ENCODE measurements at regions of chr16 and their contacts with region 1.

Region 1: GRCh38 chr16:86519649-86520316 is 9.5 kb downstream of the FOXF1 start:
- DNase-seq: no peak
- H3K4me3 ChIP-seq: no peak overlapping the region
- H3K27me3 ChIP-seq: peaks cover 3% of the 10 kb centered on the region
- CTCF ChIP-seq: peak; percentile 88

Region 2: GRCh38 chr16:86037999-86038925 is 481.5 kb before region 1 on chr16:
- CTCF ChIA-PET with region 1: interaction called, 14 read pairs
- POLR2A ChIA-PET with region 1: no interaction called
- DNase-seq: no peak
- H3K4me3 ChIP-seq: no peak overlapping the region
- H3K27me3 ChIP-seq: peaks cover 4% of the 10 kb centered on the region
- CTCF ChIP-seq: no peak

Region 3: DNA sequence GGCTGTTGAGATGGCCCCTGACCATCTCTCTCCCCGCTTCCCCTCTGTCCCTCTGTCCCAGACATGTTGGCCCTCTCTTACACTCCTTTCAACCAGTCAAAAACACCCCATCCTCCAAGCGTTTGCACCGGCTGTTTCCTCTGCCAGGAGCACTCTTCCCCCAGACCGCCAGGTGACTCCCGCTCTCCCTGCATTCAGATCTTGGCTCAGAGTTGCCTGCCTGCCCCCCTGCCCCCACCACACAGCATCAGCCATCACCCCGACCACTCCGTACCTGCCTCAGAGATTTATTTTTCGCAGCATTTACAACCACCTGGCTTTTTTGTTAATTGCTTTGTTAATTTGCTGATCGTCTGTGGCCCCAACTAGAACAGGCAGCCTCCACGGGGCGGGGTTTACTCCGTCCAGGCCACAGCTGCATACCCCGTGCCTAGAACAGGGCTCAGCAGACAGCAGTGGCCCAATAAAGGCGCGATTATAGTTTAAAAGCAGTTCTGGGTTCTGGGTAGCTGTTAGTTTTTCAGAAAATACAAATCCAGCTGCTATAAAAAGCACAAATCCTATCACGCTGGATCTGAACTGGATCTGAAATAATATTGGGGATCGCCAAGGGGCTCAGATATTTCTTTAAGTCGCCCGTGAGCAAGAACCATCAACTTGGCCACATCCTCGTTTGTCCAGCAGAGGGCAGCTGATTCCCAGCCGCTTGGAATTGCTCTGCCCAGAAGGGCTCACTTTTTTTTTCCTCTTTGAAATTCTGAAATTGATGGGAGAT is 447.3 kb before region 1 on chr16:
- CTCF ChIA-PET with region 1: interaction called, 367 read pairs
- POLR2A ChIA-PET with region 1: no interaction called
- DNase-seq: peak; percentile 6
- H3K4me3 ChIP-seq: no peak overlapping the region
- H3K27me3 ChIP-seq: no peaks in the 10 kb centered on the region; the same call in none of the 2 replicates
- CTCF ChIP-seq: peak; percentile 86

Region 4: DNA sequence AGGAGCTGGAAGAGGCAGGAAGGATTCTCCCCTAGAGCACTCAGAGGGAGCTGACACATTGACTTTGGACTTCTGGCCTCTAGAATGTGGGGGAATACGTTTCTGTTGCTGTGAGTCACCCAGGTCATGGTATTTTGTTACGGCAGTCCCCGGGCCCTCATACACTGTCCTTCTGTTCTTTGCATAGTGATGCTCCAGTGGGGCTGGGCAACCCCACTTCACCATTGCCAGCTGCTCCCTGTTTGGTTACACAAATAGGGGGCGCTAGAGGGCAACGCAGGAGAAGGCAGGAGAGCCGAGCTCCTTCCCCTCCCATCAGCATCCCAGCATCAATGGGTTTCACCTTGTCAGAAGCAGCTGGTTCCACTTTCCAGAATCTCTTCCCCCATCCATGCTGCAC is 267.2 kb before region 1 on chr16:
- CTCF ChIA-PET with region 1: interaction called, 79 read pairs
- POLR2A ChIA-PET with region 1: no interaction called
- DNase-seq: no peak
- H3K4me3 ChIP-seq: no peak overlapping the region
- H3K27me3 ChIP-seq: peaks cover 5% of the 10 kb centered on the region
- CTCF ChIP-seq: peak; percentile 49

Region 5: DNA sequence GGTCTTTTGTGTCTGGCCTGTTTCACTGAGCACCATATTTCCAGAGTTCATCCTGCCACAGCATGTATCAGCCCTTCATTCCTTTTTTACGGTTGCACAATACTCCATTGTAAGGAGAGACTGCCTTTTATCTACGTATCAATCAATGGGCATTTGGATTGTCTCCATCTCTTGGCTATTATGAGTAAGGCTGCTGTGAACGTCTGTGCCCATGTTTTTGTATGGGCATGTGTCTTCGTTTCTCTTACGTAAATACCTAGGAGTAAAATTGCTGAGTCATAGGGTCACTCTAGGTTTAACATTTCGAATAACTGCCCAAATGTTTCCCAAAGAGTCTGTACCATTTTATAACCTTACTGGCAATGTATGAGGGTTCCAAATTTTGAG is 212.3 kb before region 1 on chr16:
- CTCF ChIA-PET with region 1: interaction called, 10 read pairs
- POLR2A ChIA-PET with region 1: no interaction called
- DNase-seq: no peak
- H3K4me3 ChIP-seq: no peak overlapping the region
- H3K27me3 ChIP-seq: peaks cover 7% of the 10 kb centered on the region
- CTCF ChIP-seq: no peak

Region 6: GRCh38 chr16:86343027-86343787 is 176.6 kb before region 1 on chr16:
- CTCF ChIA-PET with region 1: interaction called, 35 read pairs
- POLR2A ChIA-PET with region 1: no interaction called
- DNase-seq: no peak
- H3K4me3 ChIP-seq: no peak overlapping the region
- H3K27me3 ChIP-seq: no peaks in the 10 kb centered on the region
- CTCF ChIP-seq: no peak

Region 7: DNA sequence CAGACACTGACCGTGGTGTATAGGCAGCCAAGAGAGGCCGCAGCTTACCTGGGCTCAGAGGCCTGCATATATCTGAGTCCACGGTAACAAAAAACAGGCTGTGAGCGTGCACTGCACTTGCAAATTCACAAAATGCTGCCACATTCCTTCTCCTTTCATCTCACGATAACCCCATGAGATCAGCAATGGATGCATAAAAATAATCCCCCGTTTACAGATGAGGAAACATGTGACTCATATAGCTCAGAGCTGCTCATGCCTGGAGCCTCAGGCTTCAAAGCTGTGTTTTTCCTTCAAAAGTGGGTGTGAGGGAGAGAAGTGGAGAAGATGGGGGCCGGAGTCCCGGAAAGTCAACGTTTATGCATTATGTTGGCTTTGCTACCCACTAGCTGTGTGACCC is 127.8 kb before region 1 on chr16:
- CTCF ChIA-PET with region 1: interaction called, 10 read pairs
- POLR2A ChIA-PET with region 1: no interaction called
- DNase-seq: no peak
- H3K4me3 ChIP-seq: no peak overlapping the region
- H3K27me3 ChIP-seq: no peaks in the 10 kb centered on the region
- CTCF ChIP-seq: no peak

Region 8: DNA sequence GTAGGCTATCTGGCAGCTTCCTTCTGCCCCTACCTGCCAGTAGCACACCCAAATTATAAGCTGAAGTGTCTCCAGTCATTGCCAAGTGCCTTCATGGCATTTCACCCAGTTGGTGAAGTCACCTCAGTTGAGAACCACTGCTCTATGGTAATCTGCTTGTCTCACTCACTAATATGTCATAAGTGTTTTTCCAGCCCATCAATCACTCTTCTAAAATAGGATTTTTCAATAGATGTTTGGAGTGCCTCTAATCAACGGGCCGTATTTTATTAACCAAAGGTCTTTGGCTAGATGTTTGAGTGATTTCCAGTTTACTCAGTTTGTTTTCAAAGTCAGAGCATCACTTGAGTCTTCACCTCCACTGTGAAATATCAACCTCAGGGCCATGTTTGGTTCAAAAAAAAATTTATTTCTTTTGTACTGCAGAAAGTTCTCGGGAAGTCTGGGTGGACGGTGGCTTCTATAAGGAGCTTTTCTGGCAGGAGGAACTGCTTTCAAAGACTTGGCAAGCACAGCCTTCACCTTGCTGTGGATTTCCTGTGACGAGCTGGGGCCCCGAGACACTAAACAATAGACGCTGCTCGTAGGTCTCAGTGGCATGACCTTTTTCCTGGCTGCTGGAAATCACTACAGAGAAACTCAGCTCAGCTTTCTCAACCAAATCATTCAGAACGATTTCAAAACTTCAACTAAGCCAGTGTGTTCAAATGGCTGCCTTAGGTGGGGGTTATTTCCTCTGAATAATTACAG is 104.6 kb before region 1 on chr16:
- CTCF ChIA-PET with region 1: no interaction called
- POLR2A ChIA-PET with region 1: no interaction called
- DNase-seq: no peak
- H3K4me3 ChIP-seq: no peak overlapping the region
- H3K27me3 ChIP-seq: peaks cover 3% of the 10 kb centered on the region
- CTCF ChIP-seq: no peak

Measured in BJ (cell line).